A549 (cell line): ENCODE measurements at regions of chr22 and their contacts with region 1.

Region 1: DNA sequence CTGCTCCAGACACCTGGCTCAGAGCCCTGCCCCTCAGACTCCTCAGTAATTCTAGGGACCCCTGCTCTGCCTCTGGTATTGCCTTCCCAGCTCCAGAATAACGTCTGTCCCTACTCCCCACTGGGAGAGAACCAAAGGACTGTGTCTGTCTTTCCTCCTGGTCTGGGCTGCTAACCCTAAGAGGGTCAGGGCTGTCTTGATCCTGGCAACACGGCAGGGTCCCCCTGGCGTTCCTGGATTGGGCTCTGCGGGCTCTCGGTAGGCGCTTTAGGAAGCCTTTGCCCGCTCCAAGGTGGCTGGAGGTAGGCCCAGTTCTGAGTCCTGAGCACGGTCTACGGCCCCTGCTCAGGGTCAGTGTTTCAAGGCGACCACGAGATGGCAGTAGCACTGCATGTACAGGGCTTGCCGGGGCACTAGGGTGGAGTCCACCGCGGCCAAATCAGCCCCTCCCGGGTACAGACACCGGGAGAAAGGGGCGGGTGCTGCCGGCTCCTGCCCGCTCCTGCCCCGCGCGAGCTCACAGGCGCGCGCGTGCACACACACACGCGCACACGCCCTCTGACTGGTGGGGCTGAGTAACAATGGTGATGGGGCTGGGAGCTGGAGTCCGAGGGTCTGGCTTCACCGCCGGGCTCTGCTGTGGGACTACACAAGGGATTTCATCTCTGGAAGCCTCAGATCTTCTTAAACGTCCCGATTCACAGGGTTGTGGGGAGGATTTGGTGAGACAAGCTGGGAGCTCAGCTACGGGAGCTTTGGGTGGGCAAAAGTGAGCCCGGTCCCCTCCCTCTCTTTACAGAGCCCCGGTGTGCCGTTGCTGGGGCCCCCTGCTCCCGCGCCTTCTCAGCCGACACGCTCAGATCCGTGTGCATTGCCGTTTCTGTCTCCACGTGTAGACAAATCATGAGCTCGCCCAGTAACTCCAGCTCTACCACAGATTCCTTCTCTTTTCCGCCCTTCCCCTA is 30.1 kb upstream of the HMOX1 start:
- DNase-seq: peak; percentile 85 to 91
- ATAC-seq: peak; percentile 81 to 93
- H3K4me3 ChIP-seq: peak overlapping the region; percentile 49
- H3K27ac ChIP-seq: peak overlapping the region; percentile 95 to 98
- H3K4me1 ChIP-seq: peaks cover 29% of the 10 kb centered on the region
- CTCF ChIP-seq: peak; percentile 74
- EP300 ChIP-seq: no peak
- POLR2A ChIP-seq: peak; percentile 57
- RAD21 ChIP-seq: peak; percentile 91 to 95

Region 2: GRCh38 chr22:35376728-35377472 is 26.1 kb after region 1 on chr22:
- CTCF ChIA-PET with region 1: interaction called, 17 read pairs
- POLR2A ChIA-PET with region 1: interaction called, 20 read pairs
- DNase-seq: peak; percentile 75 to 96
- ATAC-seq: peak; percentile 26 to 44
- H3K4me3 ChIP-seq: 0 out of 3 replicates have a peak overlapping the region, but pooled peaks have one; percentile 2
- H3K27ac ChIP-seq: peak overlapping the region; percentile 95 to 99
- H3K4me1 ChIP-seq: peaks cover 75% of the 10 kb centered on the region
- CTCF ChIP-seq: no peak
- EP300 ChIP-seq: peak; percentile 67 to 78; a peak in 3 of 5 replicates
- POLR2A ChIP-seq: no peak
- RAD21 ChIP-seq: no peak

Region 3: DNA sequence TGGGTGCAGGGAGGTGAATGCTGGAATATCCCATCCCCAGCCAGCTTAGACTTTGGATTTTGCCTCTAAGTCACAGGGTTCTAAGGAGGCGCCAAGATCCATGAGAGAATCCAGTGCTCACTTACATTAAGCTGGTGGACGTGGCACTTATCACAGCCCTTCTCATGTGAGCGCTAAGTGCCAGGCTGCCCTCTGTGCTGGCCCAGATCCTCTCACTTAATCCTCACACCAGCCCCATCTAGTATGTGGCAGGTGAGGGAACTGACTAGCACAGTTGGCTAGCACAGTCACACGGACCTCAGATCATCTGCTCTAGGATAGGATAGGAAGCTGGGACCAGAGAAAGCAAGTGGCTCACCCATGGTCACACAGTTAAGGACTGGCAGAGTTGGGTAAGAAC is 33.7 kb after region 1 on chr22:
- CTCF ChIA-PET with region 1: interaction called, 17 read pairs
- POLR2A ChIA-PET with region 1: interaction called, 20 read pairs
- DNase-seq: no peak
- ATAC-seq: no peak
- H3K4me3 ChIP-seq: peak overlapping the region; percentile 79
- H3K27ac ChIP-seq: peak overlapping the region; percentile 62 to 95
- H3K4me1 ChIP-seq: peaks cover 58% of the 10 kb centered on the region
- CTCF ChIP-seq: no peak
- EP300 ChIP-seq: no peak
- POLR2A ChIP-seq: no peak
- RAD21 ChIP-seq: no peak

Region 4: GRCh38 chr22:35785181-35785923 is 434.5 kb after region 1 on chr22:
- CTCF ChIA-PET with region 1: no interaction called
- POLR2A ChIA-PET with region 1: no interaction called
- DNase-seq: no peak
- ATAC-seq: no peak
- H3K4me3 ChIP-seq: no peak overlapping the region
- H3K27ac ChIP-seq: peak overlapping the region; percentile 71 to 87; a peak in 4 of 6 replicates
- H3K4me1 ChIP-seq: peaks cover 54% of the 10 kb centered on the region
- CTCF ChIP-seq: no peak
- EP300 ChIP-seq: no peak
- POLR2A ChIP-seq: no peak
- RAD21 ChIP-seq: no peak

Region 5: DNA sequence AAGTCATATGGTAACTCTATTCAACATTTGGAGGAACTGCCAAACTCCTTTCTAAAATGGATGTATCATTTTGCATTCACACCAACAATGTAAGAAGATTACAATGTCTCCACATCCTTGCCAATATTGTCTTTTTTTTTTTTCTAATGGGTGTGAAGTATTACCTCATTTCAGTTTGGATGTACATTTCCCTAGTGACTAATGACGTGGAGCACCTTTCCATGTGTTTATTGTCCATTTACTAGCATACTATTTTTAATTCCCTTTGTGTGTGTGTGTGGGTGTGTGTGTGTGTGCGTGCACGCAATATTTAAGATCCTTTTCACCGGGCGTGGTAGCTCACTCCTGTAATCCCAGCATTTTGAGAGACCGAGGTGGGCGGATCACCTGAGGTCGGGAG is 747.1 kb after region 1 on chr22:
- CTCF ChIA-PET with region 1: no interaction called
- POLR2A ChIA-PET with region 1: no interaction called
- DNase-seq: no peak
- ATAC-seq: no peak
- H3K4me3 ChIP-seq: no peak overlapping the region
- H3K27ac ChIP-seq: no peak overlapping the region
- H3K4me1 ChIP-seq: no peaks in the 10 kb centered on the region
- CTCF ChIP-seq: no peak
- EP300 ChIP-seq: no peak
- POLR2A ChIP-seq: no peak
- RAD21 ChIP-seq: no peak